ENCODE measurements at regions of chr6 and their contacts with region 1.

Region 1: DNA sequence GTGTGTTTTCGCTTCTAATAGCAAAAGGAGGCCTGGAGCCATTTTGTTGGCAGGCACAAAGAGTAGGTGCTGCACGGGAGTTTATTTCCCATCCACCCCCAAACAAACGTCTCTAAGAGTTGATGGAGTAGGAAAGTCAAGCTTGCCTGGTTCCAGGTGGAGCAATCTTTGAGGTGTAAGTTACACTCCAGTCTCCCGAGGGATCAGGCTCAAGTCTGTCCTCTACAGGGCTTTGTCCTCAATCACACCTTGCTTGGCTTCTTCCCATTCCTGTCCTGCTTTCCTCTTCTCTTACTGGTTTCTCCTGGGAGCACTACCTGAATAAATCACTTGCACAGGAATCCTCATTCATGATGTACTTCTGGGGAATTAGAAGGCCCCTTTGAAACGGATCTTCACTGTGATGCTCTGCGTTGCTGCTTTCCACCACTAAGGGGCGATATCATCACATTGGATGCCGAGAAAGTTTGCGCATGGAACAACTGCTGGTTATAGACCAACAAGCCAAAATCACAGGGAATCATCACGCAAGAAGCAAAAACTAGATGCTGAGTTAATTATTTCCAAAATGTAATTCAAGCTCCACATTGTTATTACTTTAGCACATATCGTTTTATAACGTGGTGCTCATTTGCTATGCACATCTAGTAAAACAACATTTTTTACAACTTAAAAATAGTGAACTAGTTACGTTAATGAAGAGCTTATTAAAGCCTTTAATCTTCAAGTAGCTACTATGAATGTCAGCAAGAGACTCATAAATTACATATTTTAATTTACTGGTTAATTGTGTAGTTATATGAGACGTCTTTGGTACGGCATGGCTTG is 156.8 kb downstream of the DNAH8 start:
- DNase-seq: peak; percentile 34
- H3K4me3 ChIP-seq: no peak overlapping the region
- H3K27ac ChIP-seq: no peak overlapping the region
- H3K4me1 ChIP-seq: no peaks in the 10 kb centered on the region
- H3K27me3 ChIP-seq: no peaks in the 10 kb centered on the region
- CTCF ChIP-seq: peak; percentile 95 to 99

Region 2: DNA sequence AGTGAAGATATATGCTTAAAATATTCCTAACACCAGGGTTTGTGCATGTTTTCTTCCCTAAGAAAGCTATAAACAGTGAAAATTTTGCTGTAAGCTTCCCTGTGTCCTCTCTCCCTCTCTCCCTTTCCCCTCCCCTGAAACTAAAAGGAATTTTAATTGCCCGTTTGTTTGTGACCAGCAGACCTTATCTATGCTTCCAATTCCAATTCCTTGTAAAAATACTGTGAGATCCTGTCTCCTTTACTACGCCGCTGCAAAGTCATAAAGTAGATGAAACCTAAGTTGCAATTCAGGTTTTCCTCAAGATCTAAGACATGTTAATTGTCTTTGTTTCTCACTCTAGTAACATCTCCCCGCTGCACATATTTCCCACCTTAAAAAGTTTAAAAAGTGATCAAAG is 74.6 kb before region 1 on chr6:
- CTCF ChIA-PET with region 1: interaction called, 6 read pairs
- dilution Hi-C with region 1: no loop called
- in situ Hi-C with region 1: no loop called
- intact Hi-C with region 1: loop called (anchors 5 kb)
- DNase-seq: no peak
- H3K4me3 ChIP-seq: no peak overlapping the region
- H3K27ac ChIP-seq: no peak overlapping the region
- H3K4me1 ChIP-seq: peaks cover 19% of the 10 kb centered on the region
- H3K27me3 ChIP-seq: no peaks in the 10 kb centered on the region
- CTCF ChIP-seq: no peak

Region 3: GRCh38 chr6:38933432-38933831 is 61.5 kb after region 1 on chr6:
- CTCF ChIA-PET with region 1: no interaction called
- dilution Hi-C with region 1: no loop called
- in situ Hi-C with region 1: no loop called
- intact Hi-C with region 1: loop called (anchors 1 kb)
- DNase-seq: peak; percentile 32
- H3K4me3 ChIP-seq: no peak overlapping the region
- H3K27ac ChIP-seq: no peak overlapping the region
- H3K4me1 ChIP-seq: no peaks in the 10 kb centered on the region
- H3K27me3 ChIP-seq: peaks cover 1% of the 10 kb centered on the region
- CTCF ChIP-seq: peak; percentile 24 to 53

Region 4: DNA sequence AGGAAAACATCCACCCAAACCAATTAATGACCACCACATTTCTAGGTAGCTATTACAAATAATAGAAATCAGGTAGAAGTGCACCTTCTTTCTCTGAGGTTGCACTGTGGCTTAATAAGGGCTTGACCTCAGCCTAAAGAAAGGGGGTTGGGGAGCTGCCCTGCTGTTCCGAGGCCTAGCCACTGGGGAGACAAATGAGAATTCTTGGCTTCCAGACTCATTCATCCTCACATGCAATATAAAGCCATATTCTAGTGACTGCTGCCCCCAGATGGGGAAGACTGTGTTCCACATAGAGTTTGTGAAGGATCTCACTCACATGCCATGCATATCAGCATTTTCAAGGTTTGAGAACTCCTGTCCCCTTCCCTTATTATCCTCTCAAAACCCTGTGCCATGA is 220.2 kb after region 1 on chr6:
- CTCF ChIA-PET with region 1: no interaction called
- dilution Hi-C with region 1: no loop called
- in situ Hi-C with region 1: no loop called
- intact Hi-C with region 1: loop called (anchors 5 kb)
- DNase-seq: no peak
- H3K4me3 ChIP-seq: no peak overlapping the region
- H3K27ac ChIP-seq: no peak overlapping the region
- H3K4me1 ChIP-seq: no peaks in the 10 kb centered on the region
- H3K27me3 ChIP-seq: no peaks in the 10 kb centered on the region
- CTCF ChIP-seq: peak in 1 of 2 donors; percentile 40

Region 5: GRCh38 chr6:39239527-39240154 is 367.7 kb after region 1 on chr6:
- CTCF ChIA-PET with region 1: no interaction called
- dilution Hi-C with region 1: no loop called
- in situ Hi-C with region 1: no loop called
- intact Hi-C with region 1: no loop called
- DNase-seq: no peak
- H3K4me3 ChIP-seq: no peak overlapping the region
- H3K27ac ChIP-seq: no peak overlapping the region
- H3K4me1 ChIP-seq: peaks cover 5% of the 10 kb centered on the region
- H3K27me3 ChIP-seq: no peaks in the 10 kb centered on the region
- CTCF ChIP-seq: no peak

Region 6: DNA sequence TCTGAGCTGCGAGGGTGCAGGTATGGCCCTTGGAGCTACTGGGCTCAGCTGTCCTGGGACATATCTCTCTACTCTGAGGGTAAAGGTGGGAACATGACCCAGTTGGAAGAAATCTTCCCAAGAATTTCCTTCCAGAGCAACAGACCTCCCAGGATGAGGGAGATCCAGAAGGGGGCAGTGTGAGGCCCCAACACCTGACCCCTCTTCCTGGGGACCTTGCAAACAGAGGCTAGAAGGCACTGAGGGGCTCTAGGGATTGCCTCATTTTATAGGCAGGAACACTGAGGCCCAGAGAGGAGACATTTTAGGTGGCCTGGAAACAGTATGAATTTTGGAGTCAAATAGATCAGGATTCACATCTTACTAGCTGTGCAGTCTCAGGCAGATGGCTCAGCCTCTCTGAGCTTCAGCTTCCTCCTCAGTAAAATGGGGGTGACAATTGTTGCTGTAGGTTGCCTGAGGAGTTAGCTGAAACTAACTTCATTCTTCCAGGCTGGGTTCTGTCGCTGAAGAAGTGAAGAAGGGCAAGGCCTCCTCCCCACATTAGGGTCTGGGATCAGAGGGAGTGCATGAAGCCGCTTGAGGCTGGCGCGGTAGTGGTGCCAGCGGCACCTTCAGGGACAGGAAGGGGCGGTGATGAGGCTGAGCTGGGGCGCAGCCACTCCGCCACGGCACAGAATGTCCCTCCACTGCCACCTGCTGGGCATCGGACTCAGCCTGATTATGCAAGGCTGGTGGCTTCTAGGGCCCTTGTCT is 430.9 kb after region 1 on chr6:
- CTCF ChIA-PET with region 1: interaction called, 4 read pairs
- dilution Hi-C with region 1: no loop called
- in situ Hi-C with region 1: loop called (anchors 25 kb)
- intact Hi-C with region 1: loop called (anchors 2 kb)
- DNase-seq: peak; percentile 56
- H3K4me3 ChIP-seq: peak overlapping the region in 1 of 3 experiments; percentile 16
- H3K27ac ChIP-seq: no peak overlapping the region
- H3K4me1 ChIP-seq: no peaks in the 10 kb centered on the region
- H3K27me3 ChIP-seq: peaks cover 3% of the 10 kb centered on the region
- CTCF ChIP-seq: peak; percentile 75 to 89

Region 7: DNA sequence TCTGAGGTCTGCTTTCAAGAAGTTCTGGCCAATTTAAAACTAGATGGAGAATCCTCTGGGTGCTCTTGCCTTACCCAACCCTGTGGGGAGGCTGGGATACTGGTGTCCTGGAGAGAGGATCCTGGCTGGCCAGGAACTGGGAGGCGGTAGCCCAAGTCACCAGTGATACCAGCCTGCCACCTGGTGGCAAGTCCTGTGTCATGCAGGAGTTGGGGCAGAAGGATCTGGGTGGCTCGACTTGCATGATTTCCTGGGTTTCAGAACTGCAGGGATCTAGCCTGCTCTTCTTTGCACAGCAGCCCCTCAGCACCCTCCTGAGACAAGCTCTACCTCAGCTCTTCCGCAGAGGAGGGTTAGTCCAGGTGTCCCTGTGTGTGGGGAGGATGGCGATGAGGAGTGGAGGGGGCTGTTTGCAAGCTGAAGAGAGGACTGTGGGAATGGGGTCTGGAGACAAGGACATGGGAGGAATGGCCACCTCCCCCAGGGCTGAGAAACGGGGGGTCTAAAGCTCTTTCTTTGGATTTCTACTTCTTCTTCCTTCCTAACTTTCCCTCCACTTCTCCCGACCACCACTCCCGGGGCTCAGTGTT is 438.1 kb after region 1 on chr6:
- CTCF ChIA-PET with region 1: no interaction called
- dilution Hi-C with region 1: no loop called
- in situ Hi-C with region 1: loop called (anchors 25 kb)
- intact Hi-C with region 1: loop called (anchors 1 kb)
- DNase-seq: peak; percentile 50
- H3K4me3 ChIP-seq: no peak overlapping the region
- H3K27ac ChIP-seq: no peak overlapping the region
- H3K4me1 ChIP-seq: no peaks in the 10 kb centered on the region
- H3K27me3 ChIP-seq: peaks cover 18% of the 10 kb centered on the region
- CTCF ChIP-seq: peak; percentile 93 to 94

Measured in mammary epithelial cell (primary cell).